ENCODE measurements at regions of chr19 and their contacts with region 1.

Region 1: DNA sequence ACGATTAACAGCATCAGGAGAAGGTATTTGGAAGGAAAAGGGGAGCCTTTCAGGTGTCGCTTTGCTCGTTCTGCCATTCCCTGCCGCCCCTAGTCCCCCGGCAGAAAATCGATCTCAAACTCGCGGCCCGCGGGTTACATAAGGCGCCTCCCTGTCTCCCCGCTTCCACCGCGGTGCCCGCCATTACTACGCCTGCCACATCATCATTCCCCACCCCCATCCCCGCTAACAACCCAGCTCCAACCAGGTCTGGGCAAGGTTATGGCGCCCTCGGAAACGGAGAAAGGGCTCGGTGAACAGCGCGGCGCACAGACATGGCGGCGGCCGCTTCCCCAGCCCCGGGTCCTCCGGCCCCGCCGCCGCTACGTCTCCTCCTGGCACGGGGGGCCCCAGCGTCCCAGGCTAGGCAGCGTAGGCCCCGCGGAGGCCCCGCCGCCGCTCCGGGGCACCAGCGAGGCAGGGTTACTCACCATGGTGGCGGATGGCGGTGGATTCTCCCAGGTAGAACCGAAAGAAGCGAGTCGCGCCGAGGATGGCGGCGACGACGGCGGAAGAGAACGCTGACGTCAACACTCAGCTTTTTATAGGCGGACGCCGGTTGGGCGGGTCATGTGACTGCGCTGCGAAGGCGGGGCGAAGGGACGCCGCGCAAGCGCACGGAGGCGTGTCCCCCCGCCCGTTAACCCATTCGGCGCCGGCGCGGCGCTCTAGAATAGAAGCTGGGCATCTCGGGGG is at the start of gene EEF2:
- DNase-seq: peak; percentile 87
- ATAC-seq: peak; percentile 25
- H3K4me3 ChIP-seq: peak within 1 kb of the TSS; percentile 97
- H3K27ac ChIP-seq: peak within 1 kb of the TSS; percentile 49
- H3K4me1 ChIP-seq: peaks cover 20% of the 10 kb centered on the region
- H3K27me3 ChIP-seq: no peaks in the 10 kb centered on the region
- CTCF ChIP-seq: no peak
- total RNA-seq, gene EEF2: 1,124 and 1,170 TPM in 2 replicates

Region 2: GRCh38 chr19:3762501-3763459 is 222.3 kb before region 1 on chr19 and contains the start of gene MRPL54:
- CTCF ChIA-PET with region 1: interaction called, 5 read pairs
- POLR2A ChIA-PET with region 1: interaction called, 4 read pairs
- intact Hi-C with region 1: loop called (anchors 5 kb)
- DNase-seq: peak; percentile 97
- ATAC-seq: peak; percentile 92
- H3K4me3 ChIP-seq: peak within 1 kb of the TSS; percentile 90
- H3K27ac ChIP-seq: peak within 1 kb of the TSS; percentile 99
- H3K4me1 ChIP-seq: peaks cover 5% of the 10 kb centered on the region; the same call in 1 of the 2 replicates
- H3K27me3 ChIP-seq: no peaks in the 10 kb centered on the region
- CTCF ChIP-seq: no peak
- total RNA-seq, gene MRPL54: 73.9 and 80.8 TPM in 2 replicates

Region 3: GRCh38 chr19:3995627-3996026 is 10.6 kb after region 1 on chr19:
- CTCF ChIA-PET with region 1: interaction called, 10 read pairs
- POLR2A ChIA-PET with region 1: no interaction called
- intact Hi-C with region 1: no loop called
- DNase-seq: no peak
- ATAC-seq: no peak; the same call in 1 of the 2 replicates
- H3K4me3 ChIP-seq: no peak overlapping the region
- H3K27ac ChIP-seq: no peak overlapping the region
- H3K4me1 ChIP-seq: no peaks in the 10 kb centered on the region
- H3K27me3 ChIP-seq: no peaks in the 10 kb centered on the region
- CTCF ChIP-seq: no peak

Region 4: DNA sequence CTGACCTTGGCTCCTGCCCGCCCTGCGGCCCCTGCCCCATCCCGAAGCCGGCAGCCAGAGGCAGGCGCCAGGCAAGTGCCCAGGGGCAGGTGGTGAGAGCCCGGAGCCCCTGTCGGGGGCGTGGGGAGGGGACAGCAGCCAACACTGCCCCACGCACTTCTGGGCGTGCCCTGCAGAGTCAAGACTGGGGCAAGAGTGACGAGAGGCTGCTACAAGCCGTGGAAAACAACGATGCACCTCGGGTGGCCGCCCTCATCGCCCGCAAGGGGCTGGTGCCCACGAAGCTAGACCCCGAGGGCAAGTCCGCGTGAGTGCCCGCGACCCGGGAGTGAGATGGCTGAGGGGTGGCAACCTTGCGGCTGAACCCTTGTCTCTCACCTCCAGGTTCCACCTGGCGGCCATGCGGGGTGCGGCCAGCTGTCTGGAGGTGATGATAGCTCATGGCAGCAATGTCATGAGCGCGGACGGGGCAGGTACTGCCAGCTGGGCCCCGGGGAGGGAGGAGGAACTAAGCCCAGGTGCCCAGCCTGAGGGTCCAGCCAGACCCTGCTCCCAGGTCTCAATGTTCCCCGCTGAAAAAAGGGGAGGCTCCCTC is 214.7 kb after region 1 on chr19:
- CTCF ChIA-PET with region 1: interaction called, 15 read pairs
- POLR2A ChIA-PET with region 1: no interaction called
- intact Hi-C with region 1: loop called (anchors 5 kb)
- DNase-seq: no peak
- ATAC-seq: no peak
- H3K4me3 ChIP-seq: no peak overlapping the region
- H3K27ac ChIP-seq: no peak overlapping the region
- H3K4me1 ChIP-seq: no peaks in the 10 kb centered on the region
- H3K27me3 ChIP-seq: peaks cover 13% of the 10 kb centered on the region
- CTCF ChIP-seq: no peak

Region 5: GRCh38 chr19:4267101-4267900 is 282.2 kb after region 1 on chr19:
- CTCF ChIA-PET with region 1: interaction called, 13 read pairs
- POLR2A ChIA-PET with region 1: no interaction called
- intact Hi-C with region 1: no loop called
- DNase-seq: peak; percentile 64
- ATAC-seq: peak; percentile 74
- H3K4me3 ChIP-seq: no peak overlapping the region
- H3K27ac ChIP-seq: no peak overlapping the region
- H3K4me1 ChIP-seq: no peaks in the 10 kb centered on the region
- H3K27me3 ChIP-seq: no peaks in the 10 kb centered on the region
- CTCF ChIP-seq: peak; percentile 65

Region 6: DNA sequence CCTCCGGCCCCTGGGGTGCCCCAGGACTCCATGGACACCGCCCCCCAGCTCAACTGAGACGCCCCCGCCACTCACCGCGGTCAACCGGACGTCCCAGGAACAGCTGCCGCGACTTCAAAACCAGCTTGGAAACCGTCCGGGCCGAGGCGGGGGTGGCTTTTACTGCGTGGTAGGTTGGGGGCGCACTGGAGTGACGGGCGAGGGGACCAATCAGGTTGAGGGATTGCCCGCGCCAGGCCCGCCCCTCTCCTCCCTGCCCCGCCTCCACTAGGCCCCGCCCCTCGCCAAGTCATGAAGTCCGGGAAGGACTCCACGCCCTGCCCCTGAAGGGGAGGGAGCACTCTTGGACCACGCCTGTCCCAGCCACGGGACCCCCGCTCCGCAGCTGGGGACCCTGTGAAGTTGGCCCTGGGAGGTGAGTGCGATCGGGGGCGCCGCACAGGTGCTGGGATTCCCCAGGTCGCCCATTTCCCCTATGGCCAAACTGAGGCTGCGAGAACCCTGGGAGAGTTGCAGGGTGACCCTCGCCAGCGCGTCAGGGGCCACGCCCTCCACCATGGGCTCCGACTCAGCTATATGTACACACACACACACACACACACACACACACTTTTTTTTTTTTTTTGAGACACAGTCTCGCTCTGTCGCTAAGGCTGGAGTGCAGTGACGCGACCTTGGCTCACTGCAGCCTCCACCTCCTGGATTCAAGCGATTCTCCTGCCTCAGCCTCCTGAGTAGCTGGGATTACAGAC is 882.6 kb after region 1 on chr19 and contains the start of gene PLIN3:
- CTCF ChIA-PET with region 1: interaction called, 12 read pairs
- POLR2A ChIA-PET with region 1: no interaction called
- intact Hi-C with region 1: no loop called
- DNase-seq: peak; percentile 95
- ATAC-seq: peak; percentile 74
- H3K4me3 ChIP-seq: peak within 1 kb of the TSS; percentile 80
- H3K27ac ChIP-seq: peak within 1 kb of the TSS; percentile 84
- H3K4me1 ChIP-seq: peaks cover 22% of the 10 kb centered on the region
- H3K27me3 ChIP-seq: no peaks in the 10 kb centered on the region
- CTCF ChIP-seq: no peak
- total RNA-seq, gene PLIN3: 136 and 159 TPM in 2 replicates

Measured in PC-3 (cell line).